ENCODE measurements at regions of chr7 and their contacts with region 1.

Region 1: GRCh38 chr7:66413379-66414114 is 208.4 kb downstream of the TPST1 start:
- DNase-seq: peak; percentile 89
- ATAC-seq: peak; percentile 94

Region 2: GRCh38 chr7:66140924-66141323 is 272.6 kb before region 1 on chr7:
- intact Hi-C with region 1: no loop called
- DNase-seq: peak; percentile 76
- ATAC-seq: peak; percentile 60

Region 3: GRCh38 chr7:66204822-66205740 is 208.5 kb before region 1 on chr7 and contains the start of gene TPST1:
- intact Hi-C with region 1: loop called (anchors 10 kb)
- DNase-seq: peak; percentile 90
- ATAC-seq: peak; percentile 98
- total RNA-seq, gene TPST1: 6.0 TPM